ENCODE measurements at regions of chr20 and their contacts with region 1.

Region 1: DNA sequence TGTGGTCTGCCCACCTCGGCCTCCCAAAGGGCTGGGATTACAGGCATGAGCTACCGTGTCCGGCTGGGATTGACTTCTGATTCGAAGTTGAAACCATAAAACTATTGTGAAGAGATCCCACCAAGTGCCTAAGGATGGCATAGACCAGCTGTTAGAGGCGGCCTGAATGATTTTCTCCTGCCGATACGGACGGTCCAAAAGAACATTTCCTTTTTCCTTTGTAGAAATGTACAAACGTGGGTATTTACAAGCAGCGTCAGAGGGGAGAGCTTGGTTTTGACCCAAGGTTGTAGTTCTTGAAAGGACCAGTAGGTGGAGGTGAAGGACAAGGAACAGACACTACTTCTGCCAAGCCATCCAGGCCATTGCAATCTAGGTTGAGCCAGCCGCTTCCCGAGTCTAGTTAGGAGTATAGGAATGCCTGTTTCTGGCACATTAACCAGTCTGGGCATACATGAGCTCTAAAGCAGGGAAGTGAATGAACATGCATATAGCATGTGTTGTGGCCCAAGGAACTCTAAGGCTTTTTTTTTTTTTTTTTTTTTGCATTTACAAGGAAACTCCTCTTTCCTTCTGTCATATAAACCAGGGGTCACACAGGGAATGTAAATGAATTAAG is 29.1 kb downstream of the MOCS3 start:
- DNase-seq: peak; percentile 93
- H3K4me3 Mint-ChIP-seq: no peak overlapping the region
- H3K27ac Mint-ChIP-seq: no peak overlapping the region
- H3K4me1 Mint-ChIP-seq: peaks cover 5% of the 10 kb centered on the region
- H3K27me3 Mint-ChIP-seq: peaks cover 40% of the 10 kb centered on the region
- CTCF ChIP-seq: peak; percentile 86

Region 2: GRCh38 chr20:51008718-51009117 is 21.0 kb after region 1 on chr20:
- CTCF ChIA-PET with region 1: interaction called, 10 read pairs
- intact Hi-C with region 1: no loop called
- DNase-seq: no peak
- H3K4me3 Mint-ChIP-seq: no peak overlapping the region
- H3K27ac Mint-ChIP-seq: no peak overlapping the region
- H3K4me1 Mint-ChIP-seq: no peaks in the 10 kb centered on the region
- H3K27me3 Mint-ChIP-seq: peaks cover 2% of the 10 kb centered on the region
- CTCF ChIP-seq: no peak

Region 3: GRCh38 chr20:51206032-51206662 is 218.4 kb after region 1 on chr20:
- CTCF ChIA-PET with region 1: no interaction called
- intact Hi-C with region 1: loop called (anchors 10 kb)
- DNase-seq: no peak
- H3K4me3 Mint-ChIP-seq: no peak overlapping the region
- H3K27ac Mint-ChIP-seq: no peak overlapping the region
- H3K4me1 Mint-ChIP-seq: no peaks in the 10 kb centered on the region
- H3K27me3 Mint-ChIP-seq: peaks cover 68% of the 10 kb centered on the region
- CTCF ChIP-seq: no peak

Region 4: DNA sequence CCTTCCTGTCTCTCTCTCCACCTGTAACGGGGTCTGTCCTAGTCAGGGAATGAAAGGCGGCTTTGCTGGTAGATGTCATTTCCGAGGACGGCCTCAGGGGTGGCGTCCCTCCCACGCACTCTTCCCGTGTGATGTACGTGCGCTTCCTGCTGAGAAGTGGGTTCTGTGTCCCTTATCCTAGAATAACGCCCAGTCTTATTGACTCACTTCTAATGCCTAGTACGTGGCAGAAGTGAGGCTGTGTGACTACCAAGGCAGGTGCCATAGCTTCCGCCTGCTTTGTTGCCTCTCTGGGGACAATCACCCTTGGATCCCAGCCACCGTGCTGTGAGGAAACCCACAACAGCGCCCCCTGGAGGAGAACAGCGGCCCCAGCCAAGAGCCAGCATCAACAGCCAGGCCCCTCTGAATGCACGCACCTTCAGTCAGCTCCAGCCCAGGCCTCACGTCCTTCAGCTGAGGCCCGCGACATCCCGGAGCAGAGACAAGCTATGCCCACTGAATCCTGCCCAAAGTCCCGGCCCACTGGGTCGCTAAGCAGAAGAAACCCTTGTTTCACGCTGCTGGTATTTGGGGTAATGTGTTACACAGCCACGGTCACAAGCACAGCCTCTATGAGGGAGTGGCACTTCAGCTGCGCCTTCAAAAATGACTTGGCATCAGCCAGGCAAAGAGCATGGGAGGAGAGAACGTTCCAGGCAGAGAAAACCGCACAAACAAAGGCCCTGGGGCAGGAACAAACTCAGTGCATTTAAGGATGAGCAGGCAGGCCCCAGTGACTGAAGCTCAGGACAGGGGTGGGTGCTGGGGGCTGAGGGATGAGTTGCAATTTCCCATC is 330.6 kb after region 1 on chr20:
- CTCF ChIA-PET with region 1: interaction called, 121 read pairs
- intact Hi-C with region 1: no loop called
- DNase-seq: peak; percentile 69
- H3K4me3 Mint-ChIP-seq: no peak overlapping the region
- H3K27ac Mint-ChIP-seq: no peak overlapping the region
- H3K4me1 Mint-ChIP-seq: peaks cover 3% of the 10 kb centered on the region
- H3K27me3 Mint-ChIP-seq: peaks cover 43% of the 10 kb centered on the region
- CTCF ChIP-seq: peak; percentile 81

Region 5: DNA sequence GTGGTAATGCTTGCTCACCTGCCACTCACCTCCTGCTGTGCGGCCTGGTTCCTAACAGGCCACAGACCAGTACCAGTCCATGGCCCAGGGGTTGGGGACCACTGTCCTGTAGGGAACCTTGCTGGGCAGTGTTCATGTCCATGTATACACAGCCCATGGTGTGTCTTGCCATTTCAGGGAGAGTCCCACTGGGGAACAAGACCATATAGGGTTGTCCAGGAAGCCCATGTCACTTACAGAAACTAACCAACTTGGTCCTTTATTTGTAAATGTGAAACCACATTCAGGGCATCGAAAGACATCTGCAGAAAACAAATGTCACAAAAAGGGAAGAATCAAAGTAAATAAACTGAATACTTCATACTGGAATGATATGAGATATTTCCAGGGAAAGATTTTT is 375.7 kb after region 1 on chr20:
- CTCF ChIA-PET with region 1: interaction called, 16 read pairs
- intact Hi-C with region 1: no loop called
- DNase-seq: no peak
- H3K4me3 Mint-ChIP-seq: no peak overlapping the region
- H3K27ac Mint-ChIP-seq: no peak overlapping the region
- H3K4me1 Mint-ChIP-seq: peaks cover 7% of the 10 kb centered on the region
- H3K27me3 Mint-ChIP-seq: peaks cover 44% of the 10 kb centered on the region
- CTCF ChIP-seq: no peak

Region 6: DNA sequence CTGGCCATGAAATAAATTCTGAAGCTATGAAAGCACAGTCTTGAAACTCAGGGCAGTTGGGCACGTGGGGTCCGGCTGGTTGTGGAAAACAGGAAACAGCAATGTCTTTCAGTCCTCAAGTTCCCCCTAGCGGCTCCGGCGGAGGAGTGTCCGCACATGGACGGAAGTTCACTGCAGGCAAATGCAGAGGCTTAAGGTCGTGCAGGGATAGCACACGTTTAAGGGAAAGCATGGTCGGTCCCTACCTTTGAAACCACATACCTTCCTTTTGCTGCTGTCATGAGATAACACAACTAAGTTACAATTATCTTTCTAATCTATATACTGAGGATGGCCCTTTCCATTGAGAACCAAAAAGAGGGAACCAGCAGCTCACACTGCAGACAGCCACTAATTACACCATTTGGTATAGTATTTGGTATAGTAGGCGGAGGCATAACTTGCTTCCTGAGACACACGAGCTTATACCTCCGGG is 607.4 kb after region 1 on chr20:
- CTCF ChIA-PET with region 1: interaction called, 17 read pairs
- intact Hi-C with region 1: loop called (anchors 2 kb)
- DNase-seq: peak; percentile 92
- H3K4me3 Mint-ChIP-seq: no peak overlapping the region
- H3K27ac Mint-ChIP-seq: no peak overlapping the region
- H3K4me1 Mint-ChIP-seq: peaks cover 10% of the 10 kb centered on the region
- H3K27me3 Mint-ChIP-seq: no peaks in the 10 kb centered on the region
- CTCF ChIP-seq: peak; percentile 95

Region 7: DNA sequence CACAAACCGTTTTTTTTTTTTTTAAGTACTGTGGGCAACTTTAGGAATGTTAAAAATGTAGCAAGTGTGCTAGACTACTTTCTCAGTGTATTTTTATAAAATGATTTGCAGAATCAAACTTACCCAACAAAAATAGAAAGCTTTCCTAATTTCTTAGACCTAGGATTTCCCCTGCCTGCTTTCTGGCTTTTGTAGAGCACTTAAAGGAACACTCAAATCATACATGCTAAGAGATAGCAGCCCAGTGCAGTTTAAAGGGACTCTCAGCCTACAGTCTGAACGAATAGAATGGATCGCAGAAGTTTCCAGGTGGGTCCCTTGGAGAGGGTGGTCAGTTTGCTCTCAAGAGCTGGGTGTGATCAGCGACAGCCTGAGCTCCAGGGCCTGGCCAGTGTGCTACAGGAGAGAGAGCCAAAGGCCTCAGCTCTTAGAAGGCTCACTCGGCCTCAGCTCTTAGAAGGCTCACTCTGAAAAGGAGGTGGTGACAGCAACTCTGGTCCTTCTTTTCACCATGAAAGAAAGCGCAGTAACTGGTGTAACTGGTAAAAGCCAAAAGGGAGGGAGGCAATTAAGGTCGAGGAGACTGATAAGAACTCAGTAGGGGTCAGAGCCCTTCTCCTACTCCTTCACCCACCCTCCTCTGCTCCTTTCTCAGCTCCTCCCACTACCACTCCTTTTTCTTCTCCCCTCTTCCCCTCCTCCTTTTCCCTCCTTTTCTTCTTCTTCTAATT is 1061.5 kb after region 1 on chr20:
- CTCF ChIA-PET with region 1: interaction called, 12 read pairs
- intact Hi-C with region 1: no loop called
- DNase-seq: no peak
- H3K4me3 Mint-ChIP-seq: no peak overlapping the region
- H3K27ac Mint-ChIP-seq: no peak overlapping the region
- H3K4me1 Mint-ChIP-seq: peaks cover 14% of the 10 kb centered on the region
- H3K27me3 Mint-ChIP-seq: no peaks in the 10 kb centered on the region
- CTCF ChIP-seq: no peak